PC-9 (cell line): ENCODE measurements at regions of chr19 and their contacts with region 1.

Region 1: DNA sequence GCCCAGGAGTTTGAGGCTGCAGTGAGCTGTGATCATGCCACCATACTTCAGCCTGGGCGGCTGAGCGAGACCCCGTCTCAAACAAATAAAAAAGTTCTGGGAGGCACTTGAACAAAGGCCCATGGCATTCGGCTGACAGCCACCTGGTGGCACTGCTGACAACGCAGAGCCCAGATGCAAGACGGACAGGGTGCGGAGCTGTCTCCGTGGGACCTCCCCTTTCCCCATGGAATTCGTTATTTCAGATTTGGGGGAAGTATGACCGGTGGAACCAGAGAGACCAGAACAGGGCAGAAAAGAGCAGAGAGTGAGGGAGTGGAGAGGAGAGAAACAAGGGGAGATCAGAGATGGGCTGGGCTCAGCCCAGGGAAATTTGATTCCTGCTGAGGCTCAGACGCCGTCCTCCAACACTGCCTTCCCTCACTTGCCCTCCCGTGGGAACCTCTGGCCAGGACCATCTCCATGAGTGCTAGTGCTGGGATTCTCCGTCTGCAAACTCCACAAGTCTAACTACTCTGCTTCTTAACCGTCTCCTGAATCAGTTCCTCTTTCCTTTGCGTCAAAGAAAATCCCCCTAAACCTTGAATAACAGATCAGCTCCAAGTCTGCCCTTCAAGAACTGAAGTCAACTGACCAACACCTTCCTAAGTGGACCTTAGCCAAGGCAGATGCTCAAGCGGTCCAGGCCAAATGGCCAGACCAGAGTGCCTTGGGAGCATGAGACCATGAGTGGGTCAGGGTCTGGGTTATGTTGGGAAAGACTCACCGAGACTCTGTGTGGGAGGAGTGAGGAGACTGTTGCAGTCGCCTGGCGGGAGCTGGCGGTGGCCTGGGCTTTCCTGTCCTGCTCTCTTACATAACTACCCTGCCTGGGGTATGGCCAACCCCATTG is 11.9 kb upstream of the ATF5 start:
- DNase-seq: no peak
- H3K4me3 ChIP-seq: no peak overlapping the region
- H3K27ac ChIP-seq: no peak overlapping the region
- H3K4me1 ChIP-seq: no peaks in the 10 kb centered on the region
- H3K27me3 ChIP-seq: no peaks in the 10 kb centered on the region
- CTCF ChIP-seq: peak; percentile 34; the same call in 1 of the 2 replicates

Region 2: DNA sequence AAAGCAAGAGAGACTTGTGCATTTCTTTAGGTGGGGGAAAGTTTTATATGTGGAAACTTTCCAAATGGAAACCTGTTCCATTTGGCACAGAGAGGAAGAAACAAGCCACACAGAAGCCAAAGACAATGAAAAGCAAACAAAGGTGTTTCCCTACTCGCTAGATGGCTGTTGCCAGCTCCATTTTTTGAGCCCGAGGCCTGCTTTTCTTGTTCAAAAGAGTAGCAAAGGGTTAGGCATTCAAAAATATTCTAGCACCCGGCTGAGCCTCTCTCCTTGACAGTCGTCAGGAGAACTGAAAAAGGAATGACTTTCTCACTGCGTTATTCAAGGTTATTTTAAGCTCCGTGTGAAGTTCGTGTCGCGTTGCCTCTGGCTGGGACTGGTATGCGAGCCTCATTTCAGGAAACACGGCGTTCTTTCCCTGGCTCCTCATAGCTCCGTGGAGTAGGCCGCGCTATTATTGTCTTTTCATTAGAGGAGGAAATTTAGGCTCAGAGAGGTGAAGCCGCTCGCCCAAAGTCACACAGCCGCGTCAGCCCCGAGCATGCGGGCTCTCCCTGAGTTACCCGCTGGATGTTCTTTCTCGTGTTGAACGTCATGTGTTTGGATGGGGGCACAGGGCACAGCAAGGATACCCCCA is 751.9 kb before region 1 on chr19:
- CTCF ChIA-PET with region 1: interaction called, 15 read pairs
- POLR2A ChIA-PET with region 1: no interaction called
- intact Hi-C with region 1: no loop called
- DNase-seq: peak; percentile 49 to 81
- H3K4me3 ChIP-seq: no peak overlapping the region
- H3K27ac ChIP-seq: peak overlapping the region; percentile 17; the same call in 1 of the 2 replicates
- H3K4me1 ChIP-seq: peaks cover 13% of the 10 kb centered on the region
- H3K27me3 ChIP-seq: no peaks in the 10 kb centered on the region
- CTCF ChIP-seq: no peak

Region 3: DNA sequence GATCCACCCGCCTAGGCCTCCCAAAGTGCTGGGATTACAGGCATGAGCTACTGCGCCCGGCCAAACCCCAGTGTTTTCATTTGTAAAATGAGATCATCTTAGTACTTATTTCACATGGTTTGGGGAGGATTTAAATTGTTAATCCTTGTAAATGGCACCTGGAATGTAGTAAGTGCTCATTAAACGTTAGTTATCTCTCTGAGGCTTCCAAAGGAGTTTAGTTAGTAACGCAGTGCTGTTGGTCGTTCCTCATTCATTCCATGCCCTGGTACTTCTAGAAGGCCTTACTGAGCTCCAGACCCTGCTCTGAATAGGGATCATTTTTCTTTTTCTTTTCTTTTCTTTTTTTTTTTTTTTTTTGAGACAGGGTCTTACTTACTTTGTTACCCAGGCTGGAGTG is 221.0 kb before region 1 on chr19:
- CTCF ChIA-PET with region 1: no interaction called
- POLR2A ChIA-PET with region 1: interaction called, 36 read pairs
- intact Hi-C with region 1: no loop called
- DNase-seq: no peak
- H3K4me3 ChIP-seq: no peak overlapping the region
- H3K27ac ChIP-seq: no peak overlapping the region
- H3K4me1 ChIP-seq: no peaks in the 10 kb centered on the region
- H3K27me3 ChIP-seq: no peaks in the 10 kb centered on the region
- CTCF ChIP-seq: no peak